B cell (primary cell): ENCODE measurements at regions of chrX and their contacts with region 1.

Region 1: DNA sequence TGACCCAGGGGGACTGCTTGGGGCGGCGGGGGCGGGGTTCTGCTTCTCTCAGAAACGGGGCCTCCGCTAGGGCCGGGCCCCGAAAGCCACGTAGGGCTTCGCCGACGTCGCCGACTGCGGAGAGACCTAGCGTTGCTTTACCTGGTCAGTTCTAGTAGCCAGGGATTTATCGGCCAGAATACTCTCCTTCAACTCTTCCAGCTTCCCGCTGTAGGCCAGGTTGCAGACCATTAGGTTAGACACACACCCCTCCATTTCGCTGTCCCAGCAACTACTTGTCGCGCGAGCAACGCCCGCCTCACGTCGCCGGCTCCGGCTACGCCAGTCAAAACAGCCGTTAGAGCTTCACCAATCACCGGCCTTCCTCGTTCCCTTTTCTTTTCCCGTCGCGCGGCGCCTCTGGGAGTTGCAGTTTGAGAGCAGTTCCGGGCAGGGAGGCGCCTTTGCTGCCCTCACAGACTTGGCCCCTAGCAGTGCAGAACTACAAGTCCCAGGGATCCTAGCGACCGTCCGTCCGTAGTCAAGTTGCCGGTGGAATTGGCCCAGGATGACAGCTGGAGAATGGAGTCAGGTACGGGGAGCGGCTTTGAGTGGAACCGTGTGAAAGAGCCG is at the starts of genes ATG4A and PSMD10:
- DNase-seq: peak; percentile 91
- ATAC-seq: peak; percentile 93
- H3K4me3 ChIP-seq: peak within 1 kb of the TSS; percentile 55 to 77 (median 75)
- H3K4me3 Mint-ChIP-seq: no peak within 1 kb of the TSS
- H3K27ac ChIP-seq: peak within 1 kb of the TSS; percentile 83 to 87
- H3K27ac Mint-ChIP-seq: no peak within 1 kb of the TSS
- H3K4me1 ChIP-seq: peaks cover 4 to 8% of the 10 kb centered on the region in 2 donors
- H3K4me1 Mint-ChIP-seq: peaks cover 5% of the 10 kb centered on the region
- H3K27me3 ChIP-seq: no peaks in the 10 kb centered on the region
- H3K27me3 Mint-ChIP-seq: no peaks in the 10 kb centered on the region
- CTCF ChIP-seq: no peak
- total RNA-seq, gene ATG4A: 9.5 and 11.4 TPM in 2 replicates
- total RNA-seq, gene PSMD10: 22.6 and 27.4 TPM in 2 replicates

Region 2: DNA sequence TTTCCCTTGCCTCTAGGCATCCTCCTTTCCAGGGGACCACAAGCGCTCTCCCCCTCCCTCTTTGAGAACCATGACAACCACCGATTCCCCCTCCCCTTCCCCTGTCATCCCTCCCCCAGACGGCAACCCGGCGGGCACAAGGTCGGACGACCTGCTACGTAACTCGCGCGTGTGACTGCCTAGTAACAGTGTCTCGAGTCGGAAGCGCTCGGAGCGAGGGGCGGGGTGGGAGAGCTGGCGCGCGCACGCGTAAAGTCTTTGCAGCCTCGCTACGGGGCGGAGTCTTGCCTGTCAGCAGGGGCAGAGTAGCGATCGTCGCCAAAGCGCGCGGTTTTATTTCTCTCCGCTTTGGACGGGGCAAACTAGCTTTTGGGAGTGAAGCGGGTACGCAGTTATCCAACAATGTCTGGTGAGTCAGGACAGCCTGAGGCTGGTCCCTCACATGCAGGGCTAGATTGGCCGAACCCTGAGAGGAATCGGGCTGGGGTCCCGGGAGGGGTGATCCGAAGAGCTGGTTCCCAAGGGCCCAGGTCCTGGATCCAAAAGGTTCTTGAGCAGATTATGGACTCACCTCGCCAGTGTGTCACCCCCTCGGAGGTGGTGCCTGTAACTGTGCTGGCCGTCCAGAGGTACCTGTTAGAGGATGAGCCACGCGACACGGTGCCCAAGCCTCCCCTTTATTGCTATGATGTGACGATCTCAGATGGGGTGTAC is 1479.5 kb before region 1 on chrX and contains the start of gene RADX:
- CTCF ChIA-PET with region 1: no interaction called
- POLR2A ChIA-PET with region 1: no interaction called
- intact Hi-C with region 1: loop called (anchors 5 kb)
- DNase-seq: peak; percentile 90
- ATAC-seq: peak; percentile 93
- H3K4me3 ChIP-seq: peak within 1 kb of the TSS in 4 of 5 experiments; percentile 67 to 77 (median 69)
- H3K4me3 Mint-ChIP-seq: peak within 1 kb of the TSS; percentile 97
- H3K27ac ChIP-seq: peak within 1 kb of the TSS; percentile 69 to 77
- H3K27ac Mint-ChIP-seq: peak within 1 kb of the TSS; percentile 90
- H3K4me1 ChIP-seq: peaks cover 0 to 3% of the 10 kb centered on the region in 2 donors
- H3K4me1 Mint-ChIP-seq: peaks cover 18% of the 10 kb centered on the region
- H3K27me3 ChIP-seq: no peaks in the 10 kb centered on the region
- H3K27me3 Mint-ChIP-seq: no peaks in the 10 kb centered on the region
- CTCF ChIP-seq: no peak
- total RNA-seq, gene RADX: 13.0 and 15.3 TPM in 2 replicates

Region 3: GRCh38 chrX:106802387-106803275 is 1288.7 kb before region 1 on chrX and contains the start of gene TBC1D8B:
- CTCF ChIA-PET with region 1: no interaction called
- POLR2A ChIA-PET with region 1: no interaction called
- intact Hi-C with region 1: loop called (anchors 10 kb)
- DNase-seq: peak; percentile 39
- ATAC-seq: peak; percentile 93
- H3K4me3 ChIP-seq: peak within 1 kb of the TSS; percentile 34 to 71 (median 51)
- H3K4me3 Mint-ChIP-seq: peak within 1 kb of the TSS; percentile 94
- H3K27ac ChIP-seq: no peak within 1 kb of the TSS
- H3K27ac Mint-ChIP-seq: peak within 1 kb of the TSS; percentile 66
- H3K4me1 ChIP-seq: peaks cover 16 to 18% of the 10 kb centered on the region in 2 donors
- H3K4me1 Mint-ChIP-seq: peaks cover 26% of the 10 kb centered on the region
- H3K27me3 ChIP-seq: peaks cover 0 to 12% (median 3%) of the 10 kb centered on the region in 4 experiments
- H3K27me3 Mint-ChIP-seq: peaks cover 5% of the 10 kb centered on the region
- CTCF ChIP-seq: no peak
- total RNA-seq, gene TBC1D8B: 8.4 and 9.1 TPM in 2 replicates

Region 4: GRCh38 chrX:107118322-107119147 is 972.8 kb before region 1 on chrX and contains the start of gene RBM41:
- CTCF ChIA-PET with region 1: no interaction called
- POLR2A ChIA-PET with region 1: no interaction called
- intact Hi-C with region 1: loop called (anchors 1 kb)
- DNase-seq: peak; percentile 81
- ATAC-seq: peak; percentile 100
- H3K4me3 ChIP-seq: peak within 1 kb of the TSS; percentile 54 to 78 (median 70)
- H3K4me3 Mint-ChIP-seq: peak within 1 kb of the TSS; percentile 100
- H3K27ac ChIP-seq: peak within 1 kb of the TSS; percentile 50 to 73
- H3K27ac Mint-ChIP-seq: peak within 1 kb of the TSS; percentile 97
- H3K4me1 ChIP-seq: peaks cover 0 to 7% of the 10 kb centered on the region in 2 donors
- H3K4me1 Mint-ChIP-seq: peaks cover 28% of the 10 kb centered on the region
- H3K27me3 ChIP-seq: no peaks in the 10 kb centered on the region
- H3K27me3 Mint-ChIP-seq: no peaks in the 10 kb centered on the region
- CTCF ChIP-seq: no peak
- total RNA-seq, gene RBM41: 32.5 and 36.5 TPM in 2 replicates

Region 5: DNA sequence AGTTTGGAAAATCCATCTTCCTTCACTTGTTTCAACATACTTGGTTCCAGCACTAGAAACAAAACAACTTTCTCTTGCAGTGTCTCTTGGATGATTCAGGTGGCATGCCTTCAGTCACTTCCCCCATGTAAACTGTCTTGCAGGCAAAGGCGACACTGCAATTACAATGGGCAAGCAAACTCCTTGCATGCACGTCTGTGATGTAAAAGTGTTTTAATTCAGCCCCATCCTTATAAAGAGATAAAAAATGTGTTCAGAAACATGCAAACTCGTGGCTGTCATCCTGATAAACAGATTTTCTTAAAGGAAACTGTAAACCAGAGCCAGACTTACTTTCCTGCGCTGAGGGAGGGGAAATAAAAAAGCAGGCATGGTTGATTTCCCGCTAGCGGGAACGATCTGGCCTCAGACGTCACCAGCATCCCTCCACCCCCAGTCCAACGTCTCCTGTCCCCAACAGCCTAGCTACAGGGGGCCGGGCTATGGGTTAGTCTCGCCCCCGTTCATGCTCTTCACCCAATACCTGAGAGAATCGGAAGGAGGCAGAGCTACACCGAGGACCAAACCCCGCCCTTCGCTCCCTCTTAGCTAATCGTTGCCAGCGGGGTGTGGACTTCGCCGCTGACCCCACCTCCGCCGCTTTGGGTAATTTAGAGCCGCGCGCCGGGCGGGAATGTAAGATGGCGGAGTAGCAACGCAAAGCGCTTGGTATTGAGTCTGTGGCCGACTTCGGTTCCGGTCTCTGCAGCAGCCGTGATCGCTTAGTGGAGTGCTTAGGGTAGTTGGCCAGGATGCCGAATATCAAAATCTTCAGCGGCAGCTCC is 463.3 kb before region 1 on chrX and contains the start of gene PRPS1:
- CTCF ChIA-PET with region 1: no interaction called
- POLR2A ChIA-PET with region 1: no interaction called
- intact Hi-C with region 1: loop called (anchors 1 kb)
- DNase-seq: peak; percentile 91
- ATAC-seq: peak; percentile 99
- H3K4me3 ChIP-seq: peak within 1 kb of the TSS; percentile 51 to 83 (median 75)
- H3K4me3 Mint-ChIP-seq: peak within 1 kb of the TSS; percentile 97
- H3K27ac ChIP-seq: peak within 1 kb of the TSS; percentile 80
- H3K27ac Mint-ChIP-seq: peak within 1 kb of the TSS; percentile 92
- H3K4me1 ChIP-seq: peaks cover 8 to 19% of the 10 kb centered on the region in 2 donors
- H3K4me1 Mint-ChIP-seq: peaks cover 31% of the 10 kb centered on the region
- H3K27me3 ChIP-seq: no peaks in the 10 kb centered on the region
- H3K27me3 Mint-ChIP-seq: no peaks in the 10 kb centered on the region
- CTCF ChIP-seq: no peak
- total RNA-seq, gene PRPS1: 45.0 and 52.1 TPM in 2 replicates

Region 6: DNA sequence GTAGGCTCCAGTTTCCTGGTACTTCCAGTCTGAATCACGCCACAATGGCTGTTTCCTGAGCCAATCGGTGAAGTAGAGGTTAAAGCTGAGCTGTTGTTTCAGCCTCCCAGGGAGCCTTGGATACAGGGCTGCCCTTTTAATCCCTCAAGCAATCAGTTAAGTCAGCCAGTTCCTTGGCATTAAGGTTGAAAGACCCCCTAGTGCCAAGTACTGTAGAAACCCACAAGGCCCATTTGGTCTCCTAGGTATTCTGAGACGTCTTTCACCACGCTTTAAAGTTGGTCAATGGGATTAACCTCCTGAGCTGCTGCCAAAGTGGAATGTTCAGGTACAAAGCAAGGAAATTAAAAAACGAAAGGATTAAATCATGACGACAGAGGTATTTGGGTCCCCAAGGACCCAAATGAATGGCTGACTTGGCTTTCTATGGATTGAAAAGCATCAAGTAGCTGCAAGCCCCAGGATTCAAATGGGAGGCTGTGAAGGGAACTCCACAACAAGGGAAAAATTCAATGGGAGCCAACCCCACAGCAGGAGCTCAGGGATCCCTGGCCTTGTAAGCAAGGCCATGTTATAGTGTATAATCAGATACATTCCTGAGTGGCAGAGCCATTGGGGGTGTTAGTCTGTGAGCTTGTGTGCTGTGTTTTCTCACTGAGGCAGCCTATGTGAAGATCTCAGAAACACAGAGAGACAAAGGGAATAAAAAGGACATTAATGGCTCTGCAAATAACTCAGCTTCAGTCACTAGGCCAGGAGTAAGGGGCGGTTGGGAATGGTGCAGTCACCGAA is 86.2 kb after region 1 on chrX:
- CTCF ChIA-PET with region 1: no interaction called
- POLR2A ChIA-PET with region 1: no interaction called
- intact Hi-C with region 1: no loop called
- DNase-seq: no peak
- ATAC-seq: no peak
- H3K4me3 ChIP-seq: no peak overlapping the region
- H3K4me3 Mint-ChIP-seq: no peak overlapping the region
- H3K27ac ChIP-seq: no peak overlapping the region
- H3K27ac Mint-ChIP-seq: no peak overlapping the region
- H3K4me1 ChIP-seq: no peaks in the 10 kb centered on the region
- H3K4me1 Mint-ChIP-seq: no peaks in the 10 kb centered on the region
- H3K27me3 ChIP-seq: no peaks in the 10 kb centered on the region
- H3K27me3 Mint-ChIP-seq: no peaks in the 10 kb centered on the region
- CTCF ChIP-seq: no peak

Region 7: GRCh38 chrX:110002300-110003166 is 1911.2 kb after region 1 on chrX and contains the start of gene TMEM164:
- CTCF ChIA-PET with region 1: no interaction called
- POLR2A ChIA-PET with region 1: no interaction called
- intact Hi-C with region 1: loop called (anchors 5 kb)
- DNase-seq: peak; percentile 88
- ATAC-seq: peak; percentile 76
- H3K4me3 ChIP-seq: peak within 1 kb of the TSS in 4 of 5 experiments; percentile 57 to 71 (median 65)
- H3K4me3 Mint-ChIP-seq: peak within 1 kb of the TSS; percentile 93
- H3K27ac ChIP-seq: peak within 1 kb of the TSS; percentile 53 to 61
- H3K27ac Mint-ChIP-seq: peak within 1 kb of the TSS; percentile 96
- H3K4me1 ChIP-seq: peaks cover 7 to 15% of the 10 kb centered on the region in 2 donors
- H3K4me1 Mint-ChIP-seq: peaks cover 25% of the 10 kb centered on the region
- H3K27me3 ChIP-seq: no peaks in the 10 kb centered on the region
- H3K27me3 Mint-ChIP-seq: no peaks in the 10 kb centered on the region
- CTCF ChIP-seq: no peak
- total RNA-seq, gene TMEM164: 24.5 and 26.6 TPM in 2 replicates